ENCODE measurements at regions of chr16 and their contacts with region 1.

Region 1: GRCh38 chr16:68528686-68529379 is 10.3 kb upstream of the ZFP90 start:
- DNase-seq: peak; percentile 80 to 86
- ATAC-seq: peak; percentile 84 to 96 (median 91)
- H3K4me3 ChIP-seq: peak overlapping the region in 4 of 10 donors; percentile 1 to 42 (median 19)
- H3K27ac ChIP-seq: no peak overlapping the region
- H3K4me1 ChIP-seq: peaks cover 3 to 23% (median 20%) of the 10 kb centered on the region in 9 donors
- H3K27me3 ChIP-seq: peaks cover 0 to 17% (median 0%) of the 10 kb centered on the region in 7 donors
- CTCF ChIP-seq: peak; percentile 87 to 98 (median 94)

Region 2: DNA sequence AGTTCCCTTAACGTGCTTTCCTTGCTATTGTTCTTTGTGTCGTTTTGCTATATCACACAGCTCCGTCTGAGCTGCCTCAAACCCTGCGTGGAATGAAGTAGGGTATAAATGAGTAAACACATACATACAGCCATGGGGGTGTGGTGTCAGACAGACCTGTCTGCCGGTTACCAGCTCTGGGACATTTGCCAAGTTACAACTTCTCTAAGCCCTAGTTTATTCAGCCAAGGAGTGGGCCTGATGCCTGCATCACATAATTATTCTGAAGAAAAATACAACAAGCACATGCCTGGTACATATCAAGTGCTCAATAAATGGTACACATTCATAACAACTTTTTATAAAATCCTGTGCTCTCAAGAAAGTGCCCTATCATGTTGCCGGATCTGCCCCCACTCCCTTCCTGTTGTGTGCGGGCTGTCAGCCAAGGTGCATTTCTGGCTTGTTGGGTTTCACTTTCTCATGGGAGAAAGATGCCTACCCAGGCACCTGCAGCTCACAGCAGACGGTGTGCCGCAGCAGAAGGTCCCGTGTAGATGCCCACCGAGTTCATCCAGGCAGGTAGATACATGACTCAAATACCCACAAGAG is 111.0 kb before region 1 on chr16:
- intact Hi-C with region 1: no loop called
- DNase-seq: peak; percentile 22 to 23
- ATAC-seq: peak in 3 of 8 donors; percentile 34 to 49 (median 49)
- H3K4me3 ChIP-seq: no peak overlapping the region
- H3K27ac ChIP-seq: peak overlapping the region in 2 of 10 donors; percentile 14 to 75
- H3K4me1 ChIP-seq: peaks cover 0 to 17% (median 0%) of the 10 kb centered on the region in 9 donors
- H3K27me3 ChIP-seq: no peaks in the 10 kb centered on the region
- CTCF ChIP-seq: no peak

Region 3: DNA sequence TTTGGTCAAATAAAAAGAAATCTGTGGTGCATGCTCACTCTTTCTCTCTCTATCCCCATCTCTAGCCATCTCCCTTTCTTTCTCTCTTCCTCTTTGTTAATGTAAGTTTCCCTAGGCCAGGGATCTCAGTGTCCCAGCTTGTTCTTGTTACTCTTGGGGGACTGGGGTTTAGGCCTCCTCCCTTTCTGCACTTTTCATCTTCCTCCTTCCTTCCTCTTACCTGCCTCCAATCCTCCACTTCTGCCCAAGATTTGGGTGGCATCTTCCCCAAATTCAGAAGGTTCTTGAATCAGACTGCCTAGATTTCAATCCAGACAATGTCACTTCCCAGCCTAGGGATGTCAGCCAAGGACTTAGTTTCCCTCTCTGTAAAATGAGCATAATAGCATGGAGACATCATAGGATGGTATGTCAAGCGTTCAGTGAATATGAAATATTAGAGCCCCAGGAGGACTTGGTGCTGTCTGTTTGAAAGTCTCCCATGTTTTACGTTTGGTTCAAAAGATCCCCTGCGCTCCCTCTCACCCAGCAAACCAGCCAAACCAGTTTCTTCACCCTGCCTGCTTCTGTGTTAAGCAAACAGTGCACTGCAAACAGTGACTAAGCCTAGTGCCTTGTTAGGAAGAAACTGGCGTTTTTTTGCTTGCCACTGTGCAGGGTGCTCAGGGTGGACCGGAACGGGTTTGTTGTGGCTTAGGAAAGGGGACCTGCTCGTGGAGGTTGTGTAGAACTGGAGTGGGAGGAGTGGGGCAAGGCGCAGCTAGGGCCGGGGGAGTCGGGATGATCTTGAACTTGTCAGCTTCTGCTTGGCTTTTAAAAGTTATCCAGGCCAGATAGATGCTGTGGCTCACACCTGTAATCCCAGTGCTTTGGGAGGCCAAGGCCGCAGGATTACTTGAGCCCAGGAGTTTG is 215.8 kb after region 1 on chr16:
- intact Hi-C with region 1: loop called in 1 of 10 experiments (anchors 10 kb)
- DNase-seq: no peak
- ATAC-seq: no peak
- H3K4me3 ChIP-seq: no peak overlapping the region
- H3K27ac ChIP-seq: no peak overlapping the region
- H3K4me1 ChIP-seq: peaks cover 0 to 5% (median 0%) of the 10 kb centered on the region in 9 donors
- H3K27me3 ChIP-seq: peaks cover 0 to 30% (median 8%) of the 10 kb centered on the region in 7 donors
- CTCF ChIP-seq: no peak

Region 4: DNA sequence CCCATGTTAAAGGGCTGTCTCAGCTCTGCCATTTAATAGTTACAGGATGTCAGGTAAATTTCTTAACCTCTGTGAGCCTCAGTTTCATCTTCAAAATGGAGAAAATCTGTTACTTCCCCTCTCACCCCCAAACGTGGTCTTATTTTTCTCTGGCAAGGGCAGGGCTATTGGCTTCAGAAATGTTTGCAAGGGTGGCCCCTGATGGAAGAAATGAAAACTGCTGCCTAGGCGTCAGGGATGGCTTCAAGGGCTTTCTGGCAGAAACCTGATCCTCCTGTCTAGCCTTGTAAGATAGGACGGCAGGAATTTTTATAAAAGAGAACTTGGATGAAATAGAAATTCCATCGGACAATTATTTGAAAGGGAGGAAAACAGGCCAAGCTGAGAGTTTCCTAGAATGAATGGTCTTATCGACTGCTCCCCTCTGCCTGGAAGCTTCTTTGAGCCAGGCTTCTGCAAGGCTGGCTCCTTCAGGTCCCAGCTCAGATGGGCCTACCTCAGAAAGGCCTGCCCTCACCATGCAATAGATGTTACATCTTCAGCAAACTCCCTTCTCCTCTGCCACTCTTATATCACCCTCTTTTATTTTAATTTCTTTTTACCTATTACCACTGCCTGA is 271.5 kb after region 1 on chr16:
- intact Hi-C with region 1: loop called in 5 of 10 experiments (anchors 2 to 10 kb)
- DNase-seq: peak in 1 of 2 donors; percentile 45
- ATAC-seq: peak in 6 of 8 donors; percentile 44 to 74 (median 61)
- H3K4me3 ChIP-seq: no peak overlapping the region
- H3K27ac ChIP-seq: no peak overlapping the region
- H3K4me1 ChIP-seq: no peaks in the 10 kb centered on the region
- H3K27me3 ChIP-seq: no peaks in the 10 kb centered on the region
- CTCF ChIP-seq: peak; percentile 23 to 71 (median 54)

Region 5: GRCh38 chr16:68843482-68844210 is 314.8 kb after region 1 on chr16 and contains the start of gene TANGO6:
- intact Hi-C with region 1: loop called in 7 of 10 experiments (anchors 5 to 10 kb)
- DNase-seq: peak; percentile 86 to 88
- ATAC-seq: peak; percentile 98 to 99 (median 98)
- H3K4me3 ChIP-seq: peak within 1 kb of the TSS; percentile 73 to 99 (median 92)
- H3K27ac ChIP-seq: peak within 1 kb of the TSS; percentile 81 to 95 (median 88)
- H3K4me1 ChIP-seq: peaks cover 0 to 21% (median 10%) of the 10 kb centered on the region in 9 donors
- H3K27me3 ChIP-seq: peaks cover 0 to 6% (median 0%) of the 10 kb centered on the region in 7 donors
- CTCF ChIP-seq: peak in 5 of 9 donors; percentile 11 to 29 (median 20)
- total RNA-seq, gene TANGO6: 6.7 to 12.9 (median 8.4) TPM

Region 6: DNA sequence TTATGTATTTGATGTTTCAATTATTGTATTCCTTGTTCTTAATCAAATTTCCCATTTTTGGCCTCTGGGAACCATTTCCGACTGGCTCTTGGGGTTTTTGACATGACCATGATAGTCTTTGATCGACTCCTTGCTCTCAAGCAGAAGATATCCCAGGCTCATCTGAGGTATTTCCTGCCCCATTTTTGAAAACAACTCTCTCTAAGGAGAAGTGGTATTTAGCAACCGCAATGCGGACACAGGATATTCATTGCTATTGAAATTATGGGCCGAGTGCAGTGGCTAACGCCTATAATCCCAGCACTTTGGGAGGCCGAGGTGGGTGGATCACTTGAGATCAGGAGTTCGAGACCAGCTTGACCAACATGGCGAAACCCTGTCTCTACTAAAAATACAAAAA is 320.0 kb after region 1 on chr16:
- intact Hi-C with region 1: loop called in 7 of 10 experiments (anchors 5 to 10 kb)
- DNase-seq: no peak
- ATAC-seq: no peak
- H3K4me3 ChIP-seq: no peak overlapping the region
- H3K27ac ChIP-seq: no peak overlapping the region
- H3K4me1 ChIP-seq: peaks cover 0 to 20% (median 6%) of the 10 kb centered on the region in 9 donors
- H3K27me3 ChIP-seq: no peaks in the 10 kb centered on the region
- CTCF ChIP-seq: no peak

Region 7: GRCh38 chr16:69112285-69113129 is 583.7 kb after region 1 on chr16:
- intact Hi-C with region 1: loop called in 1 of 10 experiments (anchors 10 kb)
- DNase-seq: peak; percentile 45 to 62
- ATAC-seq: peak in 6 of 8 donors; percentile 39 to 63 (median 50)
- H3K4me3 ChIP-seq: no peak overlapping the region
- H3K27ac ChIP-seq: no peak overlapping the region
- H3K4me1 ChIP-seq: peaks cover 9 to 50% (median 24%) of the 10 kb centered on the region in 9 donors
- H3K27me3 ChIP-seq: peaks cover 0 to 15% (median 0%) of the 10 kb centered on the region in 7 donors
- CTCF ChIP-seq: peak; percentile 23 to 78 (median 68)

Region 8: DNA sequence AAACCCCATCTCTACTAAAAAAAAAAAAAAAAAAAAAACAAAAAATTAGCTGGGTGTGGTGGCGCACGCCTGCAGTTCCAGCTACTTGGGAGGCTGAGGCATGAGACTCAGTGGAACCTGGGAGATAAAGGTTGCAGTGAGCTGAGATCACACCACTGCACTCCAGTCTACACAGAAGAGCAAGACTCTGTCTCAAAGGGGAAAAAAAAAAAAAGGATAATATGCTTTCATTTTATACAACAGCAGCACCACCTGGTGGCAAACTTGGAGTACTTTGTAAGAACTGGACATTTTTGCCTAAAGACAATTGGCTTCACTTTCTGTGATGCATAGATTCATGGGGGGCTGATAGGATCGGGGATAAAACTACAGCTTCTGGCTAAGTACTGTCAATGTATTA is 595.1 kb after region 1 on chr16:
- intact Hi-C with region 1: loop called (anchors 5 to 10 kb)
- DNase-seq: peak in 1 of 2 donors; percentile 56
- ATAC-seq: peak in 6 of 8 donors; percentile 29 to 52 (median 32)
- H3K4me3 ChIP-seq: no peak overlapping the region
- H3K27ac ChIP-seq: no peak overlapping the region
- H3K4me1 ChIP-seq: peaks cover 0 to 27% (median 14%) of the 10 kb centered on the region in 9 donors
- H3K27me3 ChIP-seq: no peaks in the 10 kb centered on the region
- CTCF ChIP-seq: peak; percentile 41 to 77 (median 69)